IMR-90 (cell line): ENCODE measurements at regions of chr7 and their contacts with region 1.

Region 1: DNA sequence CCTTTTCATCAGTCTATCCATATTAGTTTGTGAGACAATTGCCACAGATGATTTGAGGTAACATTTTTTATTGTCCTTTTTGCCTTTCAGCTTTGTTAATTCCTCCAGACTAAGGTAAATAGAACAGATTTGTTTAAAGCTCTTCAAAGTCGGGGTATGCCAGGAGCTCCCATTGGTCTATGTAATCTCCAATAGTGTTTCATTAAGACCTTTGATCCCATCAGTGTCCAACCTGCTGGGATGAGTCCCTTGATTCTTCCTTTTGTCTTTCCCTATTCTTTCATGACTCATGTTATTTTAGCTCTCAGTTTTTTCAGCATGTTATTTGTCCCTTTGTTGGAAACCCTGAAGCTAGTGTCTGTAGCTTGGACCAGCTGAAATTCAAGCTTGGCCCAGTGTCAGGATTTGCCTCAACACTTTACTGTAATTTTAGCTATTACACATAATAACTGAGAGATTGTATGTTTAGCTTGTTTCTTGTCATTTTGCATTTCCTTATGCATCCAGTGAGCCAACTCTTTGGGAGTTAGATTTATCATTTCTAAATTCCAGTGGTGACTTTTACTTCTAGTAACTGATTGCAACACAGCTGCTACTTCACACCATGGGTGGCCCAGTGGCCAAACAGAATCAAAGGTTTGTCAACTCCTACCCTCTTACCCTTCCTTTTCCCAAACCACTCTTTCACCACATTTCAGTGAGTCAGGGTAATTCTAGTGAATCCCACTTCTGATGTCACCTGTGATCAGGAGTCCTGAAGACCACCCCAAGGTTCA is 15.3 kb downstream of the AGBL3 start:
- DNase-seq: no peak
- ATAC-seq: no peak
- H3K4me3 ChIP-seq: no peak overlapping the region
- H3K27ac ChIP-seq: no peak overlapping the region
- H3K4me1 ChIP-seq: no peaks in the 10 kb centered on the region
- H3K27me3 ChIP-seq: no peaks in the 10 kb centered on the region; the same call in 1 of the 2 replicates
- CTCF ChIP-seq: no peak
- POLR2A ChIP-seq: no peak
- RAD21 ChIP-seq: no peak

Region 2: GRCh38 chr7:134031835-134032617 is 969.6 kb before region 1 on chr7:
- CTCF ChIA-PET with region 1: no interaction called
- POLR2A ChIA-PET with region 1: no interaction called
- dilution Hi-C with region 1: no loop called
- in situ Hi-C with region 1: no loop called
- intact Hi-C with region 1: no loop called
- DNase-seq: peak; percentile 4
- ATAC-seq: no peak
- H3K4me3 ChIP-seq: no peak overlapping the region
- H3K27ac ChIP-seq: no peak overlapping the region
- H3K4me1 ChIP-seq: no peaks in the 10 kb centered on the region
- H3K27me3 ChIP-seq: no peaks in the 10 kb centered on the region
- CTCF ChIP-seq: peak; percentile 18; the same call in 1 of the 2 replicates
- POLR2A ChIP-seq: no peak
- RAD21 ChIP-seq: no peak

Region 3: DNA sequence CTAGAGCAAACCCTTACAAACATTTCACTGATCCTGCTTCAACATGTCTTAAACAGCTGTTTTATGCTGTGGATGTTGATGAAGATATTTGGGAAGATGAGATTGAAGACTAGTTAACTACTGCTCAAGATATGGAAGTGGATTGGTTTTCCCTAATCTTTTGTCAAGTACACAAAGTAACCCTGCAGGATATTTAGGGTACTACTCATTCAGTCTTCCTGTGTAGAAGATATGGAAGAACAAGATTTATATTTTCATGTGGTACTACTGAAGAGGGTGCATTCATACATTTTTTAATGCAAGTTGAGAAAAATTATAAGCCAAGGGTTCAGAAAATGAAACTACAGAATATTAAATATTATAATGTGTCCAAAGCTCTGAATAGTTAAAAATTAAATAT is 128.0 kb after region 1 on chr7:
- CTCF ChIA-PET with region 1: no interaction called
- POLR2A ChIA-PET with region 1: no interaction called
- dilution Hi-C with region 1: no loop called
- in situ Hi-C with region 1: no loop called
- intact Hi-C with region 1: loop called (anchors 5 kb)
- DNase-seq: no peak
- ATAC-seq: no peak
- H3K4me3 ChIP-seq: no peak overlapping the region
- H3K27ac ChIP-seq: no peak overlapping the region
- H3K4me1 ChIP-seq: no peaks in the 10 kb centered on the region
- H3K27me3 ChIP-seq: peaks cover 2% of the 10 kb centered on the region; the same call in 1 of the 2 replicates
- CTCF ChIP-seq: no peak
- POLR2A ChIP-seq: no peak
- RAD21 ChIP-seq: no peak